Left ventricle myocardium superior (tissue), 1 donor: ENCODE measurements at regions of chr9 and their contacts with region 1.

Region 1: DNA sequence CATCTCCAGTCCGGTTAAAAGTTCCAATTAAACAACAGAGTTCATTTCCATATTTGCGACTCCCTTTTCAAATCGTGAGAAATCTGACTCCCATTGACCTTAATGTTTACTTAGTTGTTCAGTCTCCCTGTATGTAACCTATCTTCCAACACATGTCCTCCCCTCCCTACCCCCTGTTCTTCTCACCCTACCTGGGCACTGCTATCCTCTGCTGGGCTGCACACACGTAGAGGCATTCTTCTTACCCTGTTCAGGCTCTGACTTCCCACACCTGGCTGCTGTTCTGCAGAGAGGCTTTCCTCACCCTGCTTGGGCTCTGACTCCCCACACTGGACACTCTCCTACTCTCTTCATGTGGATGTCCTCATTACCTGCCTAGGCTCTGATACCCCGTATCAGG is 51.9 kb upstream of the TAL2 start:
- DNase-seq: no peak
- ATAC-seq: no peak

Region 2: DNA sequence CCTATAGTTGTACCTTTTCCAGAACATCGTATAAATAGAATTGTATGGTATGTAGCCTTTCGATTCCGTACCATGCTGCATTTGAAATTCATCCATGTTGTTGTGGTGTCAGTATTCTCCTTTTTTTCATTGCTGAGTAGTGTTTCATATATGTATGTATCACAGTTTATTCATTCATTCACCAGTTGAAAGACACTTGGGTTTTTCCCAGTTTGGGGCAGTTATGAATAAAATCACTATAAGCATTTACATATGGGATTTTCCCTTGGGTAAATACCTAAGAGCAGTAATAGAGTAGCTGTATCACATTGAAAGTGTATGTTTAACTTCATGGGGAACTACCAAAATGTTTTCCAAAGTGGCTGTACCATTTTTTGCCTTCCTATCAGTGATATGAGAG is 68.5 kb before region 1 on chr9:
- intact Hi-C with region 1: no loop called
- DNase-seq: no peak
- ATAC-seq: no peak

Region 3: DNA sequence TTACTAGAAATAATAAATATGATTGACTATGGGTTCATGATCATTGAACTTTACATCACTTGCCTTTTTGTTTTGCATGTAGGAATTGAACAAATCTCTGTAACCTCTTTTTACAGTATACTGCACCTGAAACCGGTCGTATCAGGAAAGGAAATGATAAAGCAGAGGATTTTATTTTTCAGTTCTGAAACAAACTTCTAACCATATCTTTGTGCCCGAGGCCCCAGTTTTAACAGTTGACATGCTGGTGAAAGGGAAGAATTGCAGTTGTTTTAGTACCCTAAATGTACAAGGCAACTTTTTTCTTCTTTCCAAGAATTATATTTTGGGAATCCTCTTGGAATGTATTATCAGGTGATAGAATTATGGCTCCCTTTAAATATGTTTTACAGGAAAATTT is 111.7 kb after region 1 on chr9:
- intact Hi-C with region 1: loop called (anchors 5 kb)
- DNase-seq: no peak
- ATAC-seq: no peak